ENCODE measurements at regions of chr17 and their contacts with region 1.

Region 1: DNA sequence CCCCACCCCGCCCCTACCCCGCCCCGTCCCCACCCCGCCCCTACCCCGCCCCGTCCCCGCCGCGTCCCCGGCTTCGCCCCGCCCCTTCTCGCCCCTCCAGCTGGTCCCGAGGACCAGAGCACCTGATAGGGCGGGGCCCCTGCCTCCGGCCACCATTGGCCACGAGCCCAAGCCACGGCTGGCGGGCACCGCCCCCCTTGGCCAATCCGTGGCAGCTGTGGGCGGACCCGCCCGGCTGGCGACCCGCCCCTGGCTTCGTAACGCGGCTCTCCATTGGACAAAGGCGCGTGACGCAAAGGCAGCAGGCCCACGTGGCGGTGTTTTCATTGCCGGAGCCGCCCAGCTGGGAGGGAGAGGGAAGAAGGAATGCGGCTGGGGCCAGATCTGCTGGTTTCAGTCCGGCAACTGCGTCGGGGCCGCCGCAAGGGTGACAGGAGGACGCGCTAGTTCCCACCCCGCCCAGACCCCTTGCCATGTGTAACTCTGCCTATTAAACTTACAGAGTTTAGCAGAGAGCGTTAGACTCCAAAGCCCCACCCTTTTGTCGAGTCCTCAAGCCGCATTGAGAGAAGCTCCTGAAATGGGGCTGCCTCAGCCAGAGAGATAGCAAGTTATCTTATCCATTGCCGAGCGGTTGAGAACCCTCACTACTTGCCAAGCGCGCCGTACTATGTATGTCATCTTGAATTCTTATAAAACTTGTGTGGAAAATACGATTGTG is 403 bp upstream of the WIPI1 start:
- DNase-seq: peak; percentile 99
- ATAC-seq: peak; percentile 97
- H3K4me3 ChIP-seq: peak overlapping the region; percentile 55 to 67 (median 63)
- H3K4me3 Mint-ChIP-seq: peak overlapping the region; percentile 82
- H3K27ac ChIP-seq: peak overlapping the region; percentile 56 to 75
- H3K27ac Mint-ChIP-seq: peak overlapping the region; percentile 65
- H3K4me1 ChIP-seq: peaks cover 10 to 18% of the 10 kb centered on the region in 2 donors
- H3K4me1 Mint-ChIP-seq: peaks cover 20% of the 10 kb centered on the region
- H3K27me3 ChIP-seq: no peaks in the 10 kb centered on the region
- H3K27me3 Mint-ChIP-seq: no peaks in the 10 kb centered on the region
- CTCF ChIP-seq: no peak

Region 2: DNA sequence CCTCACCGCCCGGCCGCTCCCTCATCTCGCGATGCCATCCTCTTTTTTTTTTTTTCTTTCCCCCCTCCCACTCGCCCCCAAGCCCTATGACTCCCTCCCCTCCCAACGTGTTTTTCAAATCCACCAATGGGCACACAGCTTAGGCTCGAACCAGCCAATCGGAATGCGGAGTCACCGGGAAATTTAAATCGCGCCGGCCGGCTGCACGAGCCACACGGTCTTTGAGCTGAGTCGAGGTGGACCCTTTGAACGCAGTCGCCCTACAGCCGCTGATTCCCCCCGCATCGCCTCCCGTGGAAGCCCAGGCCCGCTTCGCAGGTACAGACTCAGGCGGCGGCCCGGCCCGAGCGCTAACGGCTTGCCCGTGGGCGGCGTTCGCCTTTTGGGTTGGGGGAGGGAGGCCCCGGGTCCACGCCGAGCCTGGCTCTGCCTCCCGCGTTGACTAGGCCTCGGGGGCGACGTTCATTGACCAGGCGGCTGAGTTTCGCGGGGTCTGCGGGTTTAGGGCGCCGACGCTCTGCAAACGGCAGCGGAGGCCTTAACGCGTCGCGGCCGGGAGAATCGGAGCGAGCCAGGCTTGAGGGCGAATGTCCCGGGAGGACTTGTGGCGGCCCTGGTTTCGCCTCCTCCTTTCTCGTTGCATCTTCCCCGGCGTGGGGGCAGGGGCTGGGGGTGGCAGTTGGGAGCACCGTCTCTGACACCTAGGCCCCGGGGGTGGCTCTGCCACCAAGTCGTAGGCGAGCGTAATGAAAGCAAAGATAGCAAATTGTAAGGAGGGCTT is 422.0 kb before region 1 on chr17 and contains the start of gene KPNA2:
- CTCF ChIA-PET with region 1: interaction called, 3 read pairs
- POLR2A ChIA-PET with region 1: interaction called, 3 read pairs
- intact Hi-C with region 1: loop called (anchors 1 kb)
- DNase-seq: peak; percentile 96
- ATAC-seq: peak; percentile 88
- H3K4me3 ChIP-seq: peak within 1 kb of the TSS; percentile 68 to 98 (median 88)
- H3K4me3 Mint-ChIP-seq: peak within 1 kb of the TSS; percentile 95
- H3K27ac ChIP-seq: peak within 1 kb of the TSS; percentile 75 to 77
- H3K27ac Mint-ChIP-seq: peak within 1 kb of the TSS; percentile 67
- H3K4me1 ChIP-seq: peaks cover 7 to 9% of the 10 kb centered on the region in 2 donors
- H3K4me1 Mint-ChIP-seq: peaks cover 11% of the 10 kb centered on the region
- H3K27me3 ChIP-seq: no peaks in the 10 kb centered on the region
- H3K27me3 Mint-ChIP-seq: no peaks in the 10 kb centered on the region
- CTCF ChIP-seq: no peak
- total RNA-seq, gene KPNA2: 20.0 and 21.2 TPM in 2 replicates

Region 3: DNA sequence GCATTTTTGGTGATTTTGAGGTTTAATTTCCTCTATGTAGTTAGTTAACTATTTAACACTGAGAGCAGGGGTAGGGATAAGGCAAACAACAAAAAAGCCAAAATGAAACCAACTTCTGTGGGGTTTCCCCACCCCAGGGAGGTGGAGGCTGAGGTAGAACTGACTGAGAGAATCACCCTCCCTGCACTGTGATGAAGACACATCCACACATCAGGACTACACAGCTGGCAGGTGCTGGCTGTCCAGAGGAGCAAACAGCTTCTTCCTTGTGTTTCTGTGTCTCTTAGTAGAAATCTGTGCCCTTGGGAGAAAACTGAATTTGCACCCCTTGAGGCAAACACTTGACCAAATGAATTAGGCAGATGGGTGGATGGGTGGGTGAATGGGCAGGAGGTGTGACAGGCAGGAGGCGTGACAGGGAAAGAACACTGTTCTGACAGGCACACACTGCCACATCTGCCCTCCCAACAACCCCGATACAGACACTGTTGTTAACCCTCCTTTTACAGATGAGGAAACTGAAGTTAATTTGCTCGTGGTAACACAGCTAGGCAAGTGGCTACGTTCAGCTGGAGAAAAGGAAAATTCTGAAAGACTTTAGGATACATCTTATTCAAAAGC is 272.8 kb before region 1 on chr17:
- CTCF ChIA-PET with region 1: interaction called, 17 read pairs
- POLR2A ChIA-PET with region 1: interaction called, 5 read pairs
- intact Hi-C with region 1: loop called (anchors 5 kb)
- DNase-seq: peak; percentile 72
- ATAC-seq: peak; percentile 50
- H3K4me3 ChIP-seq: no peak overlapping the region
- H3K4me3 Mint-ChIP-seq: peak overlapping the region; percentile 96
- H3K27ac ChIP-seq: peak overlapping the region; percentile 27 to 56
- H3K27ac Mint-ChIP-seq: peak overlapping the region; percentile 83
- H3K4me1 ChIP-seq: peaks cover 53 to 59% of the 10 kb centered on the region in 2 donors
- H3K4me1 Mint-ChIP-seq: peaks cover 59% of the 10 kb centered on the region
- H3K27me3 ChIP-seq: no peaks in the 10 kb centered on the region
- H3K27me3 Mint-ChIP-seq: no peaks in the 10 kb centered on the region
- CTCF ChIP-seq: no peak

Region 4: GRCh38 chr17:68255731-68256538 is 201.8 kb before region 1 on chr17:
- CTCF ChIA-PET with region 1: interaction called, 23 read pairs
- POLR2A ChIA-PET with region 1: no interaction called
- intact Hi-C with region 1: no loop called
- DNase-seq: peak; percentile 42
- ATAC-seq: no peak
- H3K4me3 ChIP-seq: peak overlapping the region in 1 of 5 experiments; percentile 11
- H3K4me3 Mint-ChIP-seq: peak overlapping the region; percentile 72
- H3K27ac ChIP-seq: peak overlapping the region; percentile 30 to 84
- H3K27ac Mint-ChIP-seq: peak overlapping the region; percentile 85
- H3K4me1 ChIP-seq: peaks cover 68 to 73% of the 10 kb centered on the region in 2 donors
- H3K4me1 Mint-ChIP-seq: peaks cover 74% of the 10 kb centered on the region
- H3K27me3 ChIP-seq: no peaks in the 10 kb centered on the region
- H3K27me3 Mint-ChIP-seq: no peaks in the 10 kb centered on the region
- CTCF ChIP-seq: no peak

Region 5: GRCh38 chr17:68468334-68468733 is 10.6 kb after region 1 on chr17:
- CTCF ChIA-PET with region 1: interaction called, 42 read pairs
- POLR2A ChIA-PET with region 1: no interaction called
- intact Hi-C with region 1: no loop called
- DNase-seq: no peak
- ATAC-seq: no peak
- H3K4me3 ChIP-seq: no peak overlapping the region
- H3K4me3 Mint-ChIP-seq: no peak overlapping the region
- H3K27ac ChIP-seq: no peak overlapping the region
- H3K27ac Mint-ChIP-seq: no peak overlapping the region
- H3K4me1 ChIP-seq: peaks cover 0 to 2% of the 10 kb centered on the region in 2 donors
- H3K4me1 Mint-ChIP-seq: peaks cover 2% of the 10 kb centered on the region
- H3K27me3 ChIP-seq: no peaks in the 10 kb centered on the region
- H3K27me3 Mint-ChIP-seq: peaks cover 9% of the 10 kb centered on the region
- CTCF ChIP-seq: no peak

Region 6: GRCh38 chr17:68482576-68483041 is 24.9 kb after region 1 on chr17:
- CTCF ChIA-PET with region 1: no interaction called
- POLR2A ChIA-PET with region 1: no interaction called
- intact Hi-C with region 1: no loop called
- DNase-seq: no peak
- ATAC-seq: no peak
- H3K4me3 ChIP-seq: no peak overlapping the region
- H3K4me3 Mint-ChIP-seq: no peak overlapping the region
- H3K27ac ChIP-seq: no peak overlapping the region
- H3K27ac Mint-ChIP-seq: no peak overlapping the region
- H3K4me1 ChIP-seq: peaks cover 1 to 3% of the 10 kb centered on the region in 2 donors
- H3K4me1 Mint-ChIP-seq: peaks cover 2% of the 10 kb centered on the region
- H3K27me3 ChIP-seq: peaks cover 0 to 10% (median 2%) of the 10 kb centered on the region in 4 experiments
- H3K27me3 Mint-ChIP-seq: peaks cover 21% of the 10 kb centered on the region
- CTCF ChIP-seq: no peak

Region 7: DNA sequence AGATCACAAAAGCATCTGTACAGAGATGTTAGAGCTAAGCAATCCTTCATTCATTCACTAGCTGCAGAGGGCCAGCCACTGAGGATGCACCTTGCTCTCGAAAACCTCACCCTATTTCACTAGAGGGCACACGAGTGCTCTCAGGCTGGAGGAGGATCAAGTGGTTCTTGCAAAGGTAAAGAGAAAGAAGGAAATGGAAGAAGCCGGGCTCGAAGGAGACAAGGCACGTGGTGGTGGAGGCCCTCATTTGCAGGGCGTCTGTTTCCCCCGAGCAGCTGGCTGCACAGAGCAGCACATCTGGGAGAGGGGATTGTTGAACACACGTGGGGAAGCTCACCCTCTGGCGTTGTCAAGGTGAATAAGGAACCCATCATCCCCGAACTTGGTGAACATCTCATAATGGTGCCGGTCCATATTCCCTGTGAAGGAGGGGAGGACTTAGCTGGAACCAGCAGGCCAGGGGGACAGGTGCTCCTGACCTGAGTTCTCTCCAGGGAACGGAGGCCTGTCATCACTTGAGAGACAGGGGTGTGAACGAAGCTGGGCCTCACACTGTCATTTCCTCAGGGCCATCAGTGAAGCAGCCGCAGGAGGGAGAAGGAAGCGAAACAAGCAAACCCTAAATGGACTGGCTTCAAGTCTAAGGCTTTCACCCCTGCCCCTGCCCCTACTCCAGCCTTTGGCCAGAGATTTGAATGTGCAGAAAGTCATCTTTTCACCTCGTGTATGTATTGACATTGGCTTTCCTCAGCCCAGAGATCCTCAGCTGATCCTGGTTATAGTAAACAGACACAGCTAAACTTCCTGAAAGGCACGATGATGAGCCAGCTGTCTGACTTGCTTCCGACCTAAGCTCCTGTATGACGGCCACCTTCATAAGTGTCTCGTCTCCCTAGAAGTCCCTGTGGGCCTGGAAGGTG is 82.1 kb after region 1 on chr17:
- CTCF ChIA-PET with region 1: no interaction called
- POLR2A ChIA-PET with region 1: no interaction called
- intact Hi-C with region 1: no loop called
- DNase-seq: peak; percentile 41
- ATAC-seq: peak; percentile 56
- H3K4me3 ChIP-seq: no peak overlapping the region
- H3K4me3 Mint-ChIP-seq: peak overlapping the region; percentile 42
- H3K27ac ChIP-seq: peak overlapping the region in 1 of 2 donors; percentile 10
- H3K27ac Mint-ChIP-seq: peak overlapping the region; percentile 76
- H3K4me1 ChIP-seq: peaks cover 0 to 15% of the 10 kb centered on the region in 2 donors
- H3K4me1 Mint-ChIP-seq: peaks cover 16% of the 10 kb centered on the region
- H3K27me3 ChIP-seq: no peaks in the 10 kb centered on the region
- H3K27me3 Mint-ChIP-seq: no peaks in the 10 kb centered on the region
- CTCF ChIP-seq: peak; percentile 29

Region 8: DNA sequence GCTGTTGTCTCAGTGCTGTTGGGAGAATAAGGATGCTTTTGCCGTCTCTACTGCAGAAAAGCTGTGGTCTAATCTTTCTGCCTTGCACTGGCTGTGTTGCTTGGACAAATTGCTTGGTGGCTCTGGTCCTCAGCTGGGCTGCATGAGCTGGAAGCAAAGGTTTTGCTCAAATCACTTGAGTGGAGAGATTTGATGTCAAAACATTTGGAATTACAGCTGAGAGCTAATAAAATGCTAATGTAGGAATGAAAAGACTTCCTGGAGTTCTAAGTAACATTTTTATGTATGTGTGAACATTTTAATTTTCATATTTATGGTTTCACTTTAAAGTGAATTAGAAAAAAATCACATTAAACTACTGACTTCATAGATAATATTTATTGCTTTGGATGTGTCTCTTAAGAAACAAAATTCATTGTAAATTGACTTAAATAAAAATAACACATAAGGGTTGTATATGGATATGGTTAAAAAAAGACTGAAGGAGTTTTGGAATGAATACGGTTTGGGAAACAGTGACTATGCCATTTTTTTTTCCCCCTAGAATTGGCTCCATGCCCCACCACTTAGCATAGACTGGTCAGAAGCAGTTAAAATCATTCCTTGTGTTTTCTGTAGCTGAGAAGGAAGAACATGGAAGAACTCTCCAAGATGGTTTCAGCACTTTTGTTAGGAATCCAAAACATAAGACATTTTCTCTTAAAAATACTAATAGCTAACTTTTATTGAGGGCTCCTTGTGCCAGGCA is 182.7 kb after region 1 on chr17:
- CTCF ChIA-PET with region 1: no interaction called
- POLR2A ChIA-PET with region 1: no interaction called
- intact Hi-C with region 1: no loop called
- DNase-seq: no peak
- ATAC-seq: no peak
- H3K4me3 ChIP-seq: no peak overlapping the region
- H3K4me3 Mint-ChIP-seq: no peak overlapping the region
- H3K27ac ChIP-seq: no peak overlapping the region
- H3K27ac Mint-ChIP-seq: no peak overlapping the region
- H3K4me1 ChIP-seq: no peaks in the 10 kb centered on the region
- H3K4me1 Mint-ChIP-seq: no peaks in the 10 kb centered on the region
- H3K27me3 ChIP-seq: peaks cover 0 to 11% (median 1%) of the 10 kb centered on the region in 4 experiments
- H3K27me3 Mint-ChIP-seq: peaks cover 34% of the 10 kb centered on the region
- CTCF ChIP-seq: no peak

Region 9: DNA sequence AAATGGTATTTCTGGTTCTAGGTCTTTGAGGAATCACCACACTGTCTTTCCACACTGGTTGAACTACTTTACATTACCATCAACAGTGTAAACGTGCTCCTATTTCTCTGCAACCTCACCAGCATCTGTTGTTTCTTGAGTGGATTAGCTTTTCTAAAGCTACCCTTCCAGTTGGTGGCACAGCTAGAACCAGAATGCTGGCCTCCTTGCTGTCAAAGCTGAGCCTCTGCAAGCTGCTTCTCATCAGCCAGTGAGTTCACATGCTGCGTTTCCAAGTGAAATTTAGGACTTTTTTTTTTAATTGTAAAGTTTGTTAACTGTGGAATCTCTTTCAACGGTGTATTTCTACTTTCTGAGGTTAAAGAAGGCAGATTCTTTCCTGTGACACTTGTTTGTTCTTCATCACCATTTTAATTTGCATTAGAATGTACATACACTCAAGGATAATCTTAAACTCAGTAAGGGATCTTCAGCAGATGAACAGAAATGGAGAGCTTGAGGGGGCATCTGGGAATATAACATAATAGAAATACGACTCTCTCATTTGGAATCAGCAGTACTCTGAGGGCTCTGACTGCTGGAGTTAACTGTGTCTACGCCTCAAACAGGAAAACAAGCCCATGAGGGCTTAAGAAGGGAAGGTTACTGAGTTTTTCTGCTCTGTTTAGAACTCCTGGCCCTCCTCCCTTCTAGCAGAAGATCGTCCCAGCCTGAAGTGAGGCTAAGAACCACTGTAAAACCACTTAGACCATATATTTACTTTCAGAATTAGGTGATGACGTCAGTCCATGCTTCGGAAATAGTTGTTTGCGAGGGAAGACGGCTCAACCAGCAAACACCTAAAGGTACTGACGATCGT is 291.9 kb after region 1 on chr17:
- CTCF ChIA-PET with region 1: no interaction called
- POLR2A ChIA-PET with region 1: no interaction called
- intact Hi-C with region 1: no loop called
- DNase-seq: no peak
- ATAC-seq: no peak
- H3K4me3 ChIP-seq: no peak overlapping the region
- H3K4me3 Mint-ChIP-seq: no peak overlapping the region
- H3K27ac ChIP-seq: no peak overlapping the region
- H3K27ac Mint-ChIP-seq: no peak overlapping the region
- H3K4me1 ChIP-seq: no peaks in the 10 kb centered on the region
- H3K4me1 Mint-ChIP-seq: no peaks in the 10 kb centered on the region
- H3K27me3 ChIP-seq: peaks cover 0 to 2% (median 0%) of the 10 kb centered on the region in 4 experiments
- H3K27me3 Mint-ChIP-seq: peaks cover 14% of the 10 kb centered on the region
- CTCF ChIP-seq: no peak

Measured in B cell (primary cell).